Activated naive CD4-positive, alpha-beta T cell treated with anti-CD3 and anti-CD28 coated beads, Interleukin-2, amount 10 ng/mL, durations not matched to agents 7 days and 5 days (primary cell): ENCODE measurements at regions of chr16 and their contacts with region 1.

Region 1: DNA sequence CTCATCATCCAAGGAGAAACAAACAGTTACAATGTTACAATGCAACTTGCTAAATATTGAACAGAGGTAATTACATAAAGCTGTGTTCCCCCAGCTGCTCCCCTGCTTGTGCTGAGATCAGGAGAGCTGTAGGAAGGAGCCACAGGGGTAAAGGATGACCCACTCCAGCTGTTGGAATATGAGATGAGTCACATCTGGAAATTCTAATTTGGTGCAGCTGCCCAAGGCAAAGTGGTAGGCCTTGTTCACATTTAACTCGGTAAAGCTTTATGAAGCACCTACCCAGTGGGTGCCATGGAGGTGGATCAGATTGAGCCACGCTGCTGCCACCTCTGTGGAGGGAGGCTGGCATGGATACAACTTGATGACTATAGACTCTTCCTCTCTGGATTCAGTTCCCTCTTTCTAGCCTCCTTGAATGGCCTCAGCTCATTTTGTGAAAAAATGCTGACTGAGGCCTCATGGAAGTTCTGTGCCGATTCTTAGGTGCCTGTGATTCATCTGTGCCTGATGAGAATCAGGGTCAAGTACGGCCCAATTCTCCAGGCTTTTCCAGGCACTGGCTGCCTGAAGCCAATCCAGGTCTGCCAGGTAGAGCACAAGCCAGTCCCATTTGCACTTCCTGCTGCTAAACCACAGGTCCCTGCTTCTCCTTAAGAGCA is 7.4 kb downstream of the ZNF689 start:
- DNase-seq: no peak
- H3K4me3 Mint-ChIP-seq: no peak overlapping the region
- H3K27ac Mint-ChIP-seq: no peak overlapping the region
- H3K4me1 Mint-ChIP-seq: peaks cover 14% of the 10 kb centered on the region
- H3K27me3 Mint-ChIP-seq: no peaks in the 10 kb centered on the region

Region 2: DNA sequence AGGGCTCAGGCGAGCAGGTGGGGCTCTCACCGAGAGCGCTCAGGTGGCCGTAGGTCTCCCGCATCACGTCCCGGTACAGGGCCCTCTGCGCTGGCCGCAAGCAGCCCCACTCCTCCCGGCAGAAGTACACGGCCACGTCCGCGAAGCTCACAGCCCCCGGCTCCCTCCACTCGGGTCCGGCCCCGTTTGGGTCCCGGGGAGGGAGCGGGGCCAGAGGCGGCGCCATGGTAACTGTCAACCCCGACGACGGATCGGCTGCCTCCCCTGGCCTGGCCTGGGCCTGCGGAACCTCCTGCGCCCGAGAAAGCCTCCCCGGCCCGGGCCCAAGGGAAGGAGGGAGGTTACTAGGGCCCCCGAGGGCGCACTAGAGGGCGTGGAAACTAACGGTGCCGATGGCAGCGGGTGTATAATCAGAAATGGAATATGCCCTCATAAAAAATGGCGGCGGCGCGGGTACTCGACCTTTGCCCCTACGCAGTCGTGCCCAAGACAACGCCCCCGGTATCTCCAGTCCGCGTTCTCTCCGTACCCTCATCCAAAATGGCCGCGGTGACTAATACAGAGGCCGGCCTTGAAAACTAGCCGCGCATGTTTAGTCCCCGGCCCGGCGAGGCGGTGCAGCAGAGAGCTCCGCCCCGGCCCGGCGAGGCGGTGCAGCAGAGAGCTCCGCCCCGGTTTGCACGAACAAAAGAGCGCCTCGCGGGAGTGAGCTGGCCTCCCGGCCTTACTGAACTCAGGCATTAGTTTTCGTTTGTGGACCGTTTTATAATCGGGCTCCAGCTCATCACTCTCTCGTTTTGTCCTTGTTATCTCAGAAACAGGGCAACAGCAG is 44.6 kb before region 1 on chr16 and contains the start of gene ZNF764:
- CTCF ChIA-PET with region 1: interaction called, 10 read pairs
- DNase-seq: peak; percentile 98
- H3K4me3 Mint-ChIP-seq: peak within 1 kb of the TSS; percentile 85
- H3K27ac Mint-ChIP-seq: peak within 1 kb of the TSS; percentile 93
- H3K4me1 Mint-ChIP-seq: peaks cover 60% of the 10 kb centered on the region
- H3K27me3 Mint-ChIP-seq: peaks cover 8% of the 10 kb centered on the region

Region 3: DNA sequence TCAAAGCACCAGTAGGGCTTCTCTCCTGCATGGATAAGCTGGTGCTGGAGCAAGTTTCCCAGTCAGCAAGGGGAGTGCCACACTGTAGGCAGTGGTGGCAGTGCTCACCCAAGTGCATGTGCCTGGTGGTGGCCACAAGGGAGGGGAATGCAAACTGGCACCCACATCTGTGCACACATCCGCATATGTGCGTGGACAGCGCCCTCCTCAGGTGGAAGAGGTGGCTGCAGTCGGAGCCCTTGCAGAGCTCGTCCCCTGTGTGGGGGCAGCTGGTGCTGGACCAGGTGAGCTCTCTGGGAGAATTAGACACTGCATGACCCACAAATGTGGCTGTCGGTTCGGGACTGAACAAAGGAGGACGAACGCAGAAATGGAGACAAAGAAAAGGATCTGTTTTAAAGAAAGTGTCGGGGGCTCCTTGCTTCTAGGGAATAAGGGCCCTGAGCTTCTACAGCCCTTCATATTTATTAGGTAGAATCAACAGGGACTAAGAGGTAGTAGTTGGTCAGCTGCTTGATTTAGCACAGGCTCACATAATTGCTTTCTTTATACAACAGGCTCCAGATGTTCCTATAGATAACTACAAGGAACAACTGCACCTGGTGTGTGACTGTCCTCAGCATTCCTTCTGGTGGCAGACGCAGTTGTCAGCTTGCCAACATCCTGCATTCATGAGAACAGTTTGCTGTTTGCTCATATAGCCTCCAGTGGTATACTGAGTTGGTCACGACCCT is 12.8 kb after region 1 on chr16:
- CTCF ChIA-PET with region 1: interaction called, 26 read pairs
- DNase-seq: peak; percentile 87
- H3K4me3 Mint-ChIP-seq: no peak overlapping the region
- H3K27ac Mint-ChIP-seq: no peak overlapping the region
- H3K4me1 Mint-ChIP-seq: peaks cover 15% of the 10 kb centered on the region
- H3K27me3 Mint-ChIP-seq: peaks cover 12% of the 10 kb centered on the region

Region 4: DNA sequence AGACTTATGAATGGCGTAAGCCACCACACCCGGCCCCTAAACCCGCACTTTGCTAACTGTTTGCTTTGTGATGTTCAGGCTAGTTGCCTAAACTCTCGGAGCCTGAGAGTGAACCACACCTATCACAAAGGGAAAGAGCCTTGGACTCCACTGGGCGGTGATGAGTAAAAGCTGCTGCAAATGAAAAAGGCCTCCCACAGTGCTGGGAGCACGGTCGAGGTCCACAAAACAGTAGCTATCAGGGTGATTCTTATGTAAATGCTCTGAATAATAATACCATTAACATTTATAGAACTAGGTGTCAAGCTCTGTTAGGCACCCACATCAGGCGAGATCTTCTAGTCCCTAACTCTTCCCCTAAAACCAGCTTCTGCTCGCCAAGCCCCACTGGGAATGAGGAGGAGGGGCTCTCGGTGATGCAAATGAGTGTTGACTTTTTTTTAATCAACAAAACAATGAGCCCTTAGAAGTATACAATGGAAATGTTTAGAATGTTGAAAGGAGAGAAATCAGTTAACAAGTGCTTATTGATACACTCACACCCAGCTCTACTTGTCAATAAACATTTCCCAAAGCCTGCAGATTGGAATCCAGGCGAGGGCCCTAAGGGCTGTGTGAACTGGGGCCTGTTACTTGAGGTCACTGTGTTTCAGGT is 75.3 kb after region 1 on chr16:
- CTCF ChIA-PET with region 1: no interaction called
- DNase-seq: no peak
- H3K4me3 Mint-ChIP-seq: no peak overlapping the region
- H3K27ac Mint-ChIP-seq: no peak overlapping the region
- H3K4me1 Mint-ChIP-seq: no peaks in the 10 kb centered on the region
- H3K27me3 Mint-ChIP-seq: peaks cover 18% of the 10 kb centered on the region